SK-N-SH (cell line): ENCODE measurements at regions of chr22 and their contacts with region 1.

Region 1: GRCh38 chr22:24845041-24845898 is 39.3 kb downstream of the SGSM1 start:
- DNase-seq: no peak
- H3K4me3 ChIP-seq: no peak overlapping the region
- H3K27ac ChIP-seq: no peak overlapping the region
- H3K4me1 ChIP-seq: no peaks in the 10 kb centered on the region; a peak in 1 of 4 replicates
- H3K27me3 ChIP-seq: no peaks in the 10 kb centered on the region
- CTCF ChIP-seq: no peak
- EP300 ChIP-seq: no peak
- RAD21 ChIP-seq: no peak

Region 2: GRCh38 chr22:24803011-24803542 is 42.2 kb before region 1 on chr22:
- CTCF ChIA-PET with region 1: interaction called, 49 read pairs
- POLR2A ChIA-PET with region 1: no interaction called
- DNase-seq: peak; percentile 78
- H3K4me3 ChIP-seq: peak overlapping the region in 1 of 2 experiments; percentile 36; a peak in 1 of 4 replicates
- H3K27ac ChIP-seq: no peak overlapping the region
- H3K4me1 ChIP-seq: peaks cover 0 to 12% of the 10 kb centered on the region in 2 experiments; a peak in 2 of 4 replicates
- H3K27me3 ChIP-seq: no peaks in the 10 kb centered on the region
- CTCF ChIP-seq: peak; percentile 88
- EP300 ChIP-seq: no peak
- RAD21 ChIP-seq: peak; percentile 58

Region 3: DNA sequence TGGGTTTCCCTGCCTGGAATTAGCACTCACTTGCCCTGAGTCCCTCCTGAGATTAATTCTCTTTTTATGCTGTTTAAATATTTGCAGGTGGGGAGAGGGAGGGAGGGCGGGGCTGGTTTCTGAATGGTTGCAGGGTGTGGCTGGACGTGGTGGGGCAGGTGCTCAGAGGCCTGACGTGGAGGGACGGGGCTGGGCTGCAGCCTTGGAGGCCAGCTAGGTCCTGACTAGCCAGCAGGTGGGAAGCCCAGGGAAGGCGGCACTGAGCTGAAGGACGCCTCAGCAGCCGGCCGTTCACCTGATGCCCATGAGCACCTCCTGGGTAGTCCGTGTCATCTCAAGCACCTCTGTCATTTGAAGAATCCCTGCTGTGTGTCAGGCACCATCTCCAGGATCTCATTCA is 18.0 kb before region 1 on chr22:
- CTCF ChIA-PET with region 1: interaction called, 20 read pairs
- POLR2A ChIA-PET with region 1: interaction called, 3 read pairs
- DNase-seq: no peak
- H3K4me3 ChIP-seq: no peak overlapping the region
- H3K27ac ChIP-seq: no peak overlapping the region
- H3K4me1 ChIP-seq: peaks cover 0 to 18% of the 10 kb centered on the region in 2 experiments; a peak in 1 of 4 replicates
- H3K27me3 ChIP-seq: no peaks in the 10 kb centered on the region
- CTCF ChIP-seq: no peak
- EP300 ChIP-seq: no peak
- RAD21 ChIP-seq: no peak

Region 4: GRCh38 chr22:24867323-24868022 is 22.2 kb after region 1 on chr22:
- CTCF ChIA-PET with region 1: interaction called, 16 read pairs
- POLR2A ChIA-PET with region 1: no interaction called
- DNase-seq: no peak
- H3K4me3 ChIP-seq: no peak overlapping the region
- H3K27ac ChIP-seq: no peak overlapping the region
- H3K4me1 ChIP-seq: no peaks in the 10 kb centered on the region
- H3K27me3 ChIP-seq: no peaks in the 10 kb centered on the region; the same call in 1 of the 2 replicates
- CTCF ChIP-seq: no peak
- EP300 ChIP-seq: no peak
- RAD21 ChIP-seq: no peak

Region 5: GRCh38 chr22:24894220-24894975 is 49.1 kb after region 1 on chr22:
- CTCF ChIA-PET with region 1: interaction called, 14 read pairs
- POLR2A ChIA-PET with region 1: no interaction called
- DNase-seq: peak; percentile 81
- H3K4me3 ChIP-seq: peak overlapping the region in 1 of 2 experiments; percentile 47; a peak in 2 of 4 replicates
- H3K27ac ChIP-seq: peak overlapping the region; percentile 76 to 94
- H3K4me1 ChIP-seq: peaks cover 5 to 19% of the 10 kb centered on the region in 2 experiments; a peak in 3 of 4 replicates
- H3K27me3 ChIP-seq: no peaks in the 10 kb centered on the region; the same call in 1 of the 2 replicates
- CTCF ChIP-seq: no peak
- EP300 ChIP-seq: peak in 1 of 2 experiments; percentile 74; a peak in 1 of 4 replicates
- RAD21 ChIP-seq: no peak

Region 6: GRCh38 chr22:24944217-24944937 is 99.1 kb after region 1 on chr22:
- CTCF ChIA-PET with region 1: no interaction called
- POLR2A ChIA-PET with region 1: no interaction called
- DNase-seq: no peak
- H3K4me3 ChIP-seq: no peak overlapping the region
- H3K27ac ChIP-seq: no peak overlapping the region
- H3K4me1 ChIP-seq: no peaks in the 10 kb centered on the region; a peak in 1 of 4 replicates
- H3K27me3 ChIP-seq: no peaks in the 10 kb centered on the region
- CTCF ChIP-seq: no peak
- EP300 ChIP-seq: no peak
- RAD21 ChIP-seq: no peak